ENCODE measurements at regions of chr1 and their contacts with region 1.

Region 1: GRCh38 chr1:206635080-206635977 is at the start of gene DYRK3:
- DNase-seq: peak; percentile 78
- H3K4me3 ChIP-seq: peak within 1 kb of the TSS; percentile 80
- H3K27ac ChIP-seq: peak within 1 kb of the TSS; percentile 69
- H3K27me3 ChIP-seq: no peaks in the 10 kb centered on the region
- CTCF ChIP-seq: no peak
- polyA plus RNA-seq, gene DYRK3: 13.4 and 13.8 TPM in 2 replicates

Region 2: DNA sequence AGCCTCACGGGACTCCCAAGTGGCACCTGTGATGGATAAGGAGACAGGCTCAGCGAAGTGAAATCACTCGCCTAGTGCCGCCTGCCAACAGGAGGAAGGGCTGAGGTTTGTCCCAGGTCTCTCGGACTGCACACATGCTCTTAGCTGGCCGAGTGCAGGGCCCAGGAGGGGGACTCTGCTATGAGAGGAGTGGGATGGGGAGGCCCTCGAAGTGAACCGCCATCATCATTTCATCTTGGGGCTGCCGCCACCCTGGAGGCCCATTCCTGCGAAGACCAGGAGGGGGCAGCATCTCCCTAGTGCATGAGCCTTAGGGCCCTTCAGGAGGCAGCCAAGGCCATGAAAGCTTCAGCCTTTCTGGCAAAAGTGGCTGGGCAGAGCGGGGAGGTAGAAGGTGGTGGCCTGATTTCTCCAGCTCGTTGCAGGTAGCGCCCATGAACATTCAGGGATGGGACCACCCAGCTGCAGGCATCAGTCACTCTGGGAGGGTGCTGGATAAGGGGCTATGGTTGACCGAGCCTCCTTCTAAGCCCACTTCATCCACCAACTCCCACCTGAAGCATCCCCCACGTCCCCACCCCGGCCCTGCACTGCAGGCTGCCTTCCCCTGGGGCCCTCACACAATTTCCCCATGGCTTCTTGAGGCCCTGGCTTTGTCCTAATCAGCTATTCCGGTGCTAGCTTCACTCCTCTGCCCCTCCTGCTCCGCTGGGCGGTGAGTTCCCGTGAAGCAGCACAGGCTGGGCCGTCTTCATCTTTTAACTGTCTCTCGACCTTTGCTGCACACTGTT is 145.2 kb before region 1 on chr1:
- CTCF ChIA-PET with region 1: interaction called, 14 read pairs
- POLR2A ChIA-PET with region 1: no interaction called
- DNase-seq: no peak
- H3K4me3 ChIP-seq: no peak overlapping the region
- H3K27ac ChIP-seq: no peak overlapping the region
- H3K27me3 ChIP-seq: no peaks in the 10 kb centered on the region
- CTCF ChIP-seq: peak; percentile 99

Region 3: DNA sequence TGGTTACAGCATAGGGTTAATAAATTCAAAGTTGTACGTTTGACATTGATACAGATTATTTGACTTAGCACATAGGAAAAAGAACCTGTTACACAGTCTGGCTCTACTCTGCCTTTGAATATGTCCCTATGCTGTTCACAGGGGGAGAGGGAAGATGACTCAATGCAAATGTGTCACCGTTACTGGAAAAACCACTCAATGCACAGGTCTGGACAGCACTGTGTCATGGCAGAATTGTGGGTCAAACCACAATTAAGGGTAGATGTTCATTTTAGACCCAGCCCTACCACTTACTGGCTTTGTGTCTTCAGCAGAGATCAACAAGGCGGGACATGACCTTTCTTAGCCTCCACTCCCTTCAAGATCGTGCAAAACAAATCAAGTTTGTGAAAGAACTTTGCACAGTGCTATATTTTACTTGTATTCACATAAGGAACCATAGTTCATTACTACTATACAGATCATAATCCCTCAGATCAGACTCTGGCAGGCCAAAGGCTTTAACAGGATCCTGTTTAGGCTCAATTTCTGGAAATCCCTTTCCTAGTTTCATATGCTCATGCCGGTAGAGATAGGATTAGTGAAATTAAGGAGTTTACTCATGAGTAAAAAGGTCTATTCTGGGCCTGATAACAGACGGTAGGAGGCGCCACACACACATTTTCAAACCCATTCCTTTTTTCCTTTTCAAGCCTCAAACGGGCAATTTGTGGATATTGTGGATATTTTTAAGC is 45.1 kb before region 1 on chr1:
- CTCF ChIA-PET with region 1: no interaction called
- POLR2A ChIA-PET with region 1: no interaction called
- DNase-seq: no peak
- H3K4me3 ChIP-seq: no peak overlapping the region
- H3K27ac ChIP-seq: no peak overlapping the region
- H3K27me3 ChIP-seq: no peaks in the 10 kb centered on the region
- CTCF ChIP-seq: 0 out of 2 replicates have a peak, but pooled peaks have one; percentile 20

Region 4: GRCh38 chr1:206646504-206646903 is 11.2 kb after region 1 on chr1:
- CTCF ChIA-PET with region 1: interaction called, 15 read pairs
- POLR2A ChIA-PET with region 1: no interaction called
- DNase-seq: no peak
- H3K4me3 ChIP-seq: no peak overlapping the region
- H3K27ac ChIP-seq: no peak overlapping the region
- H3K27me3 ChIP-seq: no peaks in the 10 kb centered on the region
- CTCF ChIP-seq: no peak

Region 5: DNA sequence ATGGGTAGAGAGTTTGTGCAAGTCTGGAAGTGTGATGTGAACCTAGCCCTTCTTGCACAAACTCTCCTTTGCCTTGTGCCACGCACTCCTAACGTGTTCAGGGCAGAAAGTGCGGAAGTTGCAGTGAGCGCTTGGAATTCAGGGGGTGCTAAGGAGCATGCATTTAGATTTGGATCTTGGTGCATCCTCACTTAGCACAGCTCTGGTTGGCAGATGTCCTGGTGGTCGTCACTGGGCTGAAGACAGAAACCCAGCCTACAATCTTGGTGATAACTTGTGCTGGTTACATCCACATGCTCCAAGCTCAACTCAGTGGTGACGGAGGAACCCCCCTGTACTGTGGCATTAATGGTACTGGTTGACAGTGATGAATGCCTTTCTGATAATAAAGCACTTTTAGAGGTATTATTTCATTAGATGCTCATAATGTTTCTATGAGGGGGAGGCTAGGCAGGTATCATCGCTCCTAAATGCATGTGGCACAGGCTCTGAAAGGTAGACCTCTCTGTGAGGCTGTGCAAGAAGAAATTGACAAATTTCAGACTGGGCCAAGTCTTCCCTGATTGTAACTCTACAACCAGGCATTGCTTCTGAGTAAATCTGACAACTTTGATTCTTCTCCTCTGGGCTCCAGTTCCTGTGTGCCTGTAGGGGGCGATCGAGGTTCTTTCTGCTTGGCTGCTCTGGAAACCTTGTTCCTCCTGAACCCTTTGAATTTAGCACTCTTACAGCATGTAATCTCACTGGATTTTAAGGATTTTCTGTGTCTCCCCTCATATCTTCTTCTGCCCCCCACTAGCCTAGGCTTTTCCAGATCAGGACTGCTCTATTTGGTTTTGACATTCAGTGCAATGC is 90.0 kb after region 1 on chr1:
- CTCF ChIA-PET with region 1: interaction called, 12 read pairs
- POLR2A ChIA-PET with region 1: no interaction called
- DNase-seq: no peak
- H3K4me3 ChIP-seq: no peak overlapping the region
- H3K27ac ChIP-seq: no peak overlapping the region
- H3K27me3 ChIP-seq: no peaks in the 10 kb centered on the region
- CTCF ChIP-seq: peak; percentile 75

Region 6: DNA sequence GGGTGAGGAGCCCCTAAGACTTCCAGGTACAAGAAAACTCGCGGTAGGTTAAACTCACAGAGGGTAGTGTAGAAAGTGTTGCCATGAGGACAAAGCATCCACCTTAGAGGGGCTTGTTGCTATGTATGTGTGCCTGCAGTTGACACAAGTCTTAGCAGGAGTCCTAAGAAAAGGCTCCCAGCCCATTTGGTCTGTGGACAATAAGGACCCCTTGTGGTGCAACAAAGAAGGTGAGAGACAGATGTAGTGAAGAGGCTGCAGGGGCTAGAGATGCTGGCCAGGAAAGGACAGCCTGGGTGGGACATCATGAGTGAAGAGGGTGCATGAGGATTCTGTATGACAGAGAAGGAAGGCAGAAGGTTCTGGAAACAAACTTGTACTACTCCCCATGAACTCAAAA is 173.3 kb after region 1 on chr1:
- CTCF ChIA-PET with region 1: interaction called, 10 read pairs
- POLR2A ChIA-PET with region 1: no interaction called
- DNase-seq: no peak
- H3K4me3 ChIP-seq: no peak overlapping the region
- H3K27ac ChIP-seq: no peak overlapping the region
- H3K27me3 ChIP-seq: no peaks in the 10 kb centered on the region
- CTCF ChIP-seq: peak; percentile 66

Measured in AG04450 (cell line).